Naive thymus-derived CD4-positive, alpha-beta T cell (primary cell): ENCODE measurements at regions of chr4 and their contacts with region 1.

Region 1: GRCh38 chr4:1683736-1684505 is at the start of gene FAM53A:
- DNase-seq: peak in 5 of 9 donors; percentile 23 to 99 (median 88)
- ATAC-seq: peak; percentile 98
- H3K4me3 ChIP-seq: peak within 1 kb of the TSS; percentile 51
- H3K4me3 Mint-ChIP-seq: peak within 1 kb of the TSS; percentile 86 to 97 (median 93)
- H3K27ac ChIP-seq: peak within 1 kb of the TSS; percentile 62
- H3K27ac Mint-ChIP-seq: peak within 1 kb of the TSS; percentile 86 to 98 (median 91)
- H3K4me1 ChIP-seq: peaks cover 0 to 4% of the 10 kb centered on the region in 2 donors
- H3K4me1 Mint-ChIP-seq: peaks cover 9 to 15% (median 12%) of the 10 kb centered on the region in 7 donors
- H3K27me3 ChIP-seq: no peaks in the 10 kb centered on the region
- H3K27me3 Mint-ChIP-seq: peaks cover 0 to 9% (median 0%) of the 10 kb centered on the region in 5 donors
- total RNA-seq, gene FAM53A: 1.2 to 3.6 (median 1.4) TPM

Region 2: DNA sequence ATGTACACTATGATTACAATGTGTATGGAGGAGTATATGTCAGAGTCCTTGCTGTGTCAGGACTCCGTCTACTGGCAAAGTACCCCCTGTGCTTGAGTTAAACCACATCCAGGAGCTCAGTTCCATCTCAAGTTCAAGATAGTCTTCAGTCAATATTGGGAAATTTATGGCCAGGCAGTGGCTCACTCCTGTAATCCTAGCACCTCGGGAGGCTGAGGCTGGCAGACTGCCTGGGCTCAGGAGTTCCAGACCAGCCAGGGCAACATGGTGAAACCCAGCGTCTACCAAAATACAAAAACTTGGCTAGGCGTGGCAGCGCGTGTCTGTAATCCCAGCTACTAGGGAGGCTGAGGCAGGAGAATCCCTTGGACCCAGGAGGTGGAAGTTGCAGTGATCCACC is 22.4 kb after region 1 on chr4:
- CTCF ChIA-PET with region 1: no interaction called
- POLR2A ChIA-PET with region 1: no interaction called
- intact Hi-C with region 1: no loop called
- DNase-seq: no peak
- ATAC-seq: no peak
- H3K4me3 ChIP-seq: no peak overlapping the region
- H3K4me3 Mint-ChIP-seq: no peak overlapping the region
- H3K27ac ChIP-seq: no peak overlapping the region
- H3K27ac Mint-ChIP-seq: peak overlapping the region in 1 of 9 donors; percentile 2
- H3K4me1 ChIP-seq: peaks cover 11 to 22% of the 10 kb centered on the region in 2 donors
- H3K4me1 Mint-ChIP-seq: peaks cover 25 to 63% (median 59%) of the 10 kb centered on the region in 7 donors
- H3K27me3 ChIP-seq: no peaks in the 10 kb centered on the region
- H3K27me3 Mint-ChIP-seq: no peaks in the 10 kb centered on the region

Region 3: GRCh38 chr4:1856042-1856788 is 172.3 kb after region 1 on chr4 and contains the start of gene LETM1:
- CTCF ChIA-PET with region 1: no interaction called
- POLR2A ChIA-PET with region 1: no interaction called
- intact Hi-C with region 1: loop called in 1 of 2 experiments (anchors 2 kb)
- DNase-seq: peak; percentile 79 to 96 (median 88)
- ATAC-seq: peak; percentile 98
- H3K4me3 ChIP-seq: peak within 1 kb of the TSS; percentile 86
- H3K4me3 Mint-ChIP-seq: peak within 1 kb of the TSS; percentile 67 to 88 (median 83)
- H3K27ac ChIP-seq: peak within 1 kb of the TSS; percentile 70
- H3K27ac Mint-ChIP-seq: peak within 1 kb of the TSS in 8 of 9 donors; percentile 17 to 80 (median 48)
- H3K4me1 ChIP-seq: peaks cover 10 to 14% of the 10 kb centered on the region in 2 donors
- H3K4me1 Mint-ChIP-seq: peaks cover 31 to 45% (median 41%) of the 10 kb centered on the region in 7 donors
- H3K27me3 ChIP-seq: no peaks in the 10 kb centered on the region
- H3K27me3 Mint-ChIP-seq: no peaks in the 10 kb centered on the region
- total RNA-seq, gene LETM1: 29.5 to 56.4 (median 36.0) TPM